ENCODE measurements at regions of chr6 and their contacts with region 1.

Region 1: DNA sequence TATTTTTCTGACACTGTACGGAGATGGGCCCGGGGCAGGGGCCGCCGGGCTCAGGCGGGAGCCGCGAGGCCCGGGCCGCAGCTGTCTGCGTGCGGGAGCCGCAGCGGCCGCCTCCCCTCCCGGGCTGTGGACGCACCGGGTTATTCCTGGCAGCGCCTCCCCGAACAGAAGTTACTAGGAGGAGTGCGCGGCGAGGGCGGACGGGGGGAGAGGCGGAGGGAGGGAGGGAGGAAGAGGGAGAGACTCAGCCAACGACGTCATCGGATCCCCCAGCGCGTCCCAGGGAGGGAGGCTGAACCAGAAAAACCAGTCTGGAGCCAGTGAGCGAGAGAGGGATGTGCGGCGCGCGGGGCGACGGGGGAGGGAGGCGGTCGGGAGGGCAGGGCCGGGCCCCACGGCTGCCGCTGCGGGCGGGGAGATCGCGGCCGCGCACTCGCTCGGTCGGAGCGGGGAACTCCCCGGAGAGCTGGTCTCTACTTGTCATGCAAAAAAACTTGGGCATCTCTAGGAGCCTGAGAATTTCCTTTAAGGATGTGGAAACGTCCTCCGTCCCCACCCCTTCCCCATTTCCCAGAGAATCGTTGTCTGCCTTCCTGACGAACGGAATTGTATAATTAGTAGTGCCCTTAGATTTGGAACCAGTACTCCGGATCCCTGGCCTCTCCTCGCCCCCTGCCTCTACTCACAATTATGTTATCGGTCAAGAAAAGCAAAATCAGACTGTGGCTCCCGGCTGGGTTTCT is 1.4 kb upstream of the HIVEP2 start:
- DNase-seq: peak; percentile 98 to 100 (median 99)
- ATAC-seq: peak; percentile 85 to 90 (median 88)
- H3K4me3 ChIP-seq: peak overlapping the region; percentile 72 to 99 (median 93)
- H3K27ac ChIP-seq: peak overlapping the region; percentile 94 to 100 (median 99)
- H3K4me1 ChIP-seq: peaks cover 0 to 42% (median 15%) of the 10 kb centered on the region in 12 donors
- H3K27me3 ChIP-seq: no peaks in the 10 kb centered on the region
- CTCF ChIP-seq: no peak
- POLR2A ChIP-seq: peak in 1 of 2 donors; percentile 94

Region 2: GRCh38 chr6:142692942-142693341 is 253.4 kb before region 1 on chr6:
- intact Hi-C with region 1: loop called (anchors 2 to 10 kb)
- DNase-seq: peak; percentile 62 to 73 (median 69)
- ATAC-seq: peak; percentile 58 to 84 (median 80)
- H3K4me3 ChIP-seq: peak overlapping the region in 3 of 12 donors; percentile 7 to 8 (median 8)
- H3K27ac ChIP-seq: peak overlapping the region in 2 of 12 donors; percentile 3 to 12
- H3K4me1 ChIP-seq: peaks cover 0 to 42% (median 5%) of the 10 kb centered on the region in 12 donors
- H3K27me3 ChIP-seq: no peaks in the 10 kb centered on the region
- CTCF ChIP-seq: peak; percentile 87 to 98 (median 94)
- POLR2A ChIP-seq: no peak

Region 3: DNA sequence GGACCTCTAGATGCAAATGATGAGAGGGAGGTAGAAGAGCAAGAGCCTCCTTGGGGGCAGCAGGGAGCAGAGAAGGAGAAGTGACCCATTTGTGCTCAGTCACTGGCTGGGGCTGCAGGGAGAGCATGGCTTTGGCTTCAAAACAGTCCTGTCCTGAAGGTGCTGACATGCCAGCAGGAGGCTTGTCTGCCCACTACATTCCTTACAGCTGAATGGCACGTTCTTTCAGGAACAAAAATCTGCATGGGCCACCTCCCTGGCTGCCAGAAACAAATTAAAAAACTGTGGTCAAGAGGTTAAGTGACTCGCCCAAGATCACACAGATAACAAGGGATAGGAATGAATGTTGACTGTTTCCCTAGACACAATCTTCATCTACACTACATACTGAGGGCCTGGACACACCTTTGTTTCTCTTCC is 190.1 kb before region 1 on chr6:
- intact Hi-C with region 1: loop called in 1 of 10 experiments (anchors 10 kb)
- DNase-seq: peak in 1 of 5 donors; percentile 41
- ATAC-seq: peak; percentile 57 to 72 (median 64)
- H3K4me3 ChIP-seq: no peak overlapping the region
- H3K27ac ChIP-seq: no peak overlapping the region
- H3K4me1 ChIP-seq: peaks cover 0 to 8% (median 0%) of the 10 kb centered on the region in 12 donors
- H3K27me3 ChIP-seq: no peaks in the 10 kb centered on the region
- CTCF ChIP-seq: no peak
- POLR2A ChIP-seq: no peak

Region 4: GRCh38 chr6:142845624-142846458 is 100.5 kb before region 1 on chr6:
- intact Hi-C with region 1: loop called in 8 of 10 experiments (anchors 2 to 10 kb)
- DNase-seq: peak; percentile 91 to 96 (median 95)
- ATAC-seq: peak; percentile 95 to 97 (median 96)
- H3K4me3 ChIP-seq: peak overlapping the region in 10 of 12 donors; percentile 23 to 53 (median 42)
- H3K27ac ChIP-seq: peak overlapping the region; percentile 69 to 89 (median 86)
- H3K4me1 ChIP-seq: peaks cover 11 to 96% (median 78%) of the 10 kb centered on the region in 12 donors
- H3K27me3 ChIP-seq: no peaks in the 10 kb centered on the region
- CTCF ChIP-seq: peak in 4 of 12 donors; percentile 7 to 28 (median 26)
- POLR2A ChIP-seq: peak in 1 of 2 donors; percentile 63

Region 5: DNA sequence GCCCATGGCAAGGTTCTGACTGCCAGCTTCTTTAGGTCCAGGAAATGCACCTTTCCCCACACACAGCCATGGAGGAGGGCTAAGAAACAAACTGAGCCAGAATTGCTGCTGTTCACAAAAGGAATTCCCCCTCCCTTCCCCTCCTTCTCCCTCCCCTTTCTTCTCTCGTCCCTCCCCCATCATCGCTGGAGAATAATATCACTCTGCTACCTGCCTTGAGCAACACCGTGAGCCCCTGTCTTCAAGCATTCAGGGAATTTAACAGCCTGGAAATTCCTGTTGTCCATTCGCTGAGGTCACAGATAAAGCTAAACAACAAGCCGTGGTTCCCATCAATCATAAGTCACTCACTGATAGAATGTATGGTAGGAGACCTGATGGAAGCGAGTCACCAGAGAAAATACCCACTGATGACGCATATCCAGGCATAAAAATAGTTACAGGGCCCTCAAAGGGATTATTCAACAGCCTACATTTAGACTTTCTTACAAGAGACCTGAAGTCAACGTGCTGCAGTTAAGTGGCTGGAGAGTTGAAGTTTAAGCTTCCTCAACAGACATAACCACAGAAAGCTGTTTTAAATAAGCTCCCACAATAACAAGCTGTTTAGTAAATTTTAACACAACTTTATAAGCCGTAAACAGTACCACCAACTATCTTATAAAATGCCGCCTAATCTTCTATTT is 61.0 kb before region 1 on chr6:
- intact Hi-C with region 1: loop called in 9 of 10 experiments (anchors 2 to 10 kb)
- DNase-seq: peak in 3 of 5 donors; percentile 38 to 67 (median 48)
- ATAC-seq: peak; percentile 89 to 97 (median 94)
- H3K4me3 ChIP-seq: peak overlapping the region in 10 of 12 donors; percentile 23 to 59 (median 50)
- H3K27ac ChIP-seq: peak overlapping the region; percentile 7 to 79 (median 70)
- H3K4me1 ChIP-seq: peaks cover 7 to 66% (median 45%) of the 10 kb centered on the region in 12 donors
- H3K27me3 ChIP-seq: no peaks in the 10 kb centered on the region
- CTCF ChIP-seq: no peak
- POLR2A ChIP-seq: peak in 1 of 2 donors; percentile 5

Region 6: DNA sequence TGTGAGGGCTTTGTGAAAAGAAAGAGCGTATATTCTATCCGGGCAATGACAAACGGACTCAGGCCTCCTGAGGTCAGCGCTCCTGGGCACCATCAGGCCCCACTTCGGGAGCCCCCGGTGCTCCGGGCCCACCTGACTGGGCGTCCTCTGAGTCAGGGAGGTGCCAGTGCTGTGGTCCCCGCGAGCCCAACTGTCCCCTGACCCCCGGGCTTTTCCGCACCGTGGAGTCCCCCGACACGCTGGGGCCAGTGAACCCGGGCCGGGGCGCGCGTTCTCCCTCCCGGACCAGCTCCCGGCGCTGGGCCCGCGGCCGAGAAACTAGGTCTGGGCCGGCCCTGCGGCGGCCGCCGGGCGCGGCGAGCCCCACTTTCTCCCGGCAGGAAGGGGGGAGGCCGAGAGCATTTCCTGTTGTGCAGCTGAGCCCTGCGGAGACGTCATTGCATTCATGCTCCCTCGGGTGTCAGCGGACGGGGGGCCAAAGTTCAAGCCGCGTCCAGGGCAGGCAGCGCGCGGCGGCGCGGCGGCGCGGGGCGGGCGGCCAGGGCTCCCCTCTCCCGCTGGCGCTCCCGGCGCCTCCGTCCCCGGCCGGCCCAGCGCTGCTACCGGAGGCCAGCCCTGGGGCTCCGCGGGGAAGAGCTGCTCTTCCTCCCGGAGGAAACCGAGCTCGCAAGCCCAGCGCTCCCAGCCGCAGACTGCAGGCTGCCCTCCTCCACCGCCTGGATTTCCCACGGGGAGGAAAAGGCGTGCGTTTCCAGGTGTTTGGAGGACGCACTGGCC is 19.7 kb before region 1 on chr6:
- intact Hi-C with region 1: loop called in 6 of 10 experiments (anchors 1 to 2 kb)
- DNase-seq: peak; percentile 91 to 94 (median 93)
- ATAC-seq: peak; percentile 79 to 95 (median 93)
- H3K4me3 ChIP-seq: peak overlapping the region; percentile 49 to 87 (median 68)
- H3K27ac ChIP-seq: peak overlapping the region; percentile 92 to 98 (median 96)
- H3K4me1 ChIP-seq: peaks cover 7 to 47% (median 32%) of the 10 kb centered on the region in 12 donors
- H3K27me3 ChIP-seq: no peaks in the 10 kb centered on the region
- CTCF ChIP-seq: no peak
- POLR2A ChIP-seq: peak in 1 of 2 donors; percentile 48

Region 7: GRCh38 chr6:143060354-143060805 is 114.0 kb after region 1 on chr6:
- intact Hi-C with region 1: loop called in 6 of 10 experiments (anchors 1 to 10 kb)
- DNase-seq: peak; percentile 82 to 88 (median 86)
- ATAC-seq: peak; percentile 70 to 92 (median 88)
- H3K4me3 ChIP-seq: peak overlapping the region; percentile 68 to 96 (median 84)
- H3K27ac ChIP-seq: peak overlapping the region; percentile 73 to 98 (median 93)
- H3K4me1 ChIP-seq: peaks cover 0 to 27% (median 12%) of the 10 kb centered on the region in 12 donors
- H3K27me3 ChIP-seq: no peaks in the 10 kb centered on the region
- CTCF ChIP-seq: peak in 5 of 12 donors; percentile 17 to 40 (median 26)
- POLR2A ChIP-seq: no peak

Measured in heart left ventricle (tissue), 16 donors.